HEK293T (cell line): ENCODE measurements at regions of chr12 and their contacts with region 1.

Region 1: DNA sequence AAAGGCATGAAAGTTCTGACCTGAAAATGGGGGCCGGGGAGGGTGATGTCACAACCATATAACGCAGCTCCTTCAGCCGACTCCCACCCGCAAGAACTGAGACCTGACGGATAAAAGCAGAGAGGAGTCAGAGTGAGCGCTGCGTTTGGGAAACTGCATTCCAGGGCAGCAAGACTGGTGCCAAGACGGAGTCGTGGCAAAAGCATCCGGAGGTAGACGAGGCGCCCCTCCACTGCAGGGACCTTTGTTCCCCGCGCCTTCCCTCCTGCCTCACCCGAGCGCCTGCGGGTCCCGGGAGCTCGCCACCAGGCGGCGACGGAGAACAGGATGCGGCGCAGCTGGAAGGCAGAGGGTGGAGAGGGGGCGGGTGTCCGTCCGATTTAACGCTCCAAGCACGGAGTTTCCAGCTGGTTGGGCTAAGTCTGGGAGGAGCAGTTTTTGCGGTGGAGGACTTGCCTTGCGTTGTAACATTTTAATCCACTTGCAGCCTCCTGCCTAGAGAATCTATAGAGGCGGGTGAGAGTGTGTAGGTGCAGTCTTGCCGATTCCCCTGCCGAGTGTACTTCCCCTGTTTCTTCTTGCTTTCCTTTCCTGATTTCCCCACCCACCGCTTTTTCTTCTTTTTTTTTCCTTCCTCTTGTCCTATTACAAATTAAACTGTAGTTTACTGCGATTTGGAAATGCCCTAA is 1.2 kb upstream of the CPNE8 start:
- DNase-seq: peak; percentile 80

Region 2: GRCh38 chr12:38895446-38895845 is 11.2 kb before region 1 on chr12:
- CTCF ChIA-PET with region 1: interaction called, 3 read pairs
- POLR2A ChIA-PET with region 1: interaction called, 25 read pairs
- DNase-seq: no peak